ENCODE measurements at regions of chr22 and their contacts with region 1.

Region 1: DNA sequence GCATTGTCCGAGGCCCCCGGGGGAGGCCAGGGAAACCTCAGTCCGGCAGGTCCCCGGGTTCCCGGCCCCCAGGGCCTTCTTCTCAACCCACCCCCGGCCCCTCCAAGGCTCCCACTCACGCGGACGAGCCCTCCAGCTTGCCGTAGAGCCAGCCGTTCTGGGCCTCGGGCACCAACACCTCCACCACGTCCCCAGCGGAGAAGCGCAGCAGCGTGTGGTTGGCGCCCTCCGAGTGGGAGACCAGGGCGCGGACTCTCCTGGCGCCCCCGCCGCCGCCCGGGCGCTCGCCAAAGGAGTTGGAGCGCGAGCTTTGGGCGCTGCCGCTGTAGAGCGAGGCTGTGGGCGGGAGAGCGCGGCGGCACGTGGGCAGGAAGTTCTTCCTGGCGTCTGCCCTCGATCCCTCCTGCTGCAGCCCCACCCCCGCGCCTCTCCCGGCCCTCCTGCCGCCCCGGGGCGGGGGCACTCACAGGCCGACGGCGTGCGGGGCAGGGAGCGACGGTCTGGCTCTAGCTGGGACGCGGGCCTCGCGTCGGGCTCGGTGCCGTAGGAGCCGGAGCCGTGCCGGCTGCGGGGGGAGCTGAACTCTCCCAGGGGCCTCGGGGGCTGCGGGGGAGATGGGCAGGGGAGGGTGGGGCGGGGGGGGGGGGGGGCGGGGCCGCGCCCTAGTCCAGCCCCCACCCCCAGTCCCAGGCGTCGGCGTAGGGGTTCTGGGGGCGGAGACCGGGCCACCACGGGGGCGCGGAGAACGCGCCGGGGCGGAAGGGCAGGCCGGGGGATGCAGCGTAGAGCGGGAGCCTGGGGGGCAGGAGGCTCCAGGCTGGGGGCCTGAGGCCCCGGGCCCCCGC is 4.9 kb upstream of the SLC16A8 start:
- DNase-seq: no peak
- H3K4me3 ChIP-seq: no peak overlapping the region
- H3K27ac ChIP-seq: no peak overlapping the region
- H3K4me1 ChIP-seq: no peaks in the 10 kb centered on the region
- H3K27me3 ChIP-seq: peaks cover 6 to 12% of the 10 kb centered on the region in 2 experiments
- CTCF ChIP-seq: no peak
- POLR2A ChIP-seq: no peak

Region 2: DNA sequence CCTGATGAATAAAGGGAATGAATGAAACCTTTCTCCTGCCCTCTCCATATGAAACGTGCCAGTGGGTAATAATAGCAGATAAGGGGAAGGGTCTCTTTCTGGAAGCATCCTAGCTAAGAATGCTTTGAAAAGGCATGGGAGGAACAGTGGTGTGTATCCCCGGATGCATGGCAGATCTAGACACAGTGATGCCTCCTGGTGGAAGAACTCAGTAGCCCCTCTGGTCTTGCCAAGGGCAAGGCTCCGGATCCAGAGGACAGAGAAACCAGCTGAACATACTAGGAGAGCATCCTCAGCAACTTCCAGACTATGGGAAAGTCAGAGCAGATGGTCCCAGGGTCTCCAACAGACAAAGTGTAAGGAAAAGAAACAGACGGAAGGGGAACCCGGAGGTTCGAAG is 15.2 kb after region 1 on chr22:
- CTCF ChIA-PET with region 1: interaction called, 10 read pairs
- POLR2A ChIA-PET with region 1: interaction called, 9 read pairs
- dilution Hi-C with region 1: no loop called
- intact Hi-C with region 1: no loop called
- DNase-seq: no peak
- H3K4me3 ChIP-seq: no peak overlapping the region
- H3K27ac ChIP-seq: no peak overlapping the region
- H3K4me1 ChIP-seq: no peaks in the 10 kb centered on the region
- H3K27me3 ChIP-seq: no peaks in the 10 kb centered on the region
- CTCF ChIP-seq: peak; percentile 16 to 34
- POLR2A ChIP-seq: no peak

Region 3: GRCh38 chr22:38153821-38154562 is 65.1 kb after region 1 on chr22:
- CTCF ChIA-PET with region 1: no interaction called
- POLR2A ChIA-PET with region 1: no interaction called
- dilution Hi-C with region 1: no loop called
- intact Hi-C with region 1: no loop called
- DNase-seq: no peak
- H3K4me3 ChIP-seq: no peak overlapping the region
- H3K27ac ChIP-seq: no peak overlapping the region
- H3K4me1 ChIP-seq: no peaks in the 10 kb centered on the region
- H3K27me3 ChIP-seq: no peaks in the 10 kb centered on the region
- CTCF ChIP-seq: no peak
- POLR2A ChIP-seq: no peak